Posterior cingulate gyrus (tissue), 11 donors: ENCODE measurements at regions of chr4 and their contacts with region 1.

Region 1: GRCh38 chr4:143406523-143406922 is 69.8 kb downstream of the GAB1 start:
- DNase-seq: no peak

Region 2: GRCh38 chr4:143346206-143346605 is 60.3 kb before region 1 on chr4:
- intact Hi-C with region 1: loop called (anchors 10 kb)
- DNase-seq: no peak